ENCODE measurements at regions of chr1 and their contacts with region 1.

Region 1: DNA sequence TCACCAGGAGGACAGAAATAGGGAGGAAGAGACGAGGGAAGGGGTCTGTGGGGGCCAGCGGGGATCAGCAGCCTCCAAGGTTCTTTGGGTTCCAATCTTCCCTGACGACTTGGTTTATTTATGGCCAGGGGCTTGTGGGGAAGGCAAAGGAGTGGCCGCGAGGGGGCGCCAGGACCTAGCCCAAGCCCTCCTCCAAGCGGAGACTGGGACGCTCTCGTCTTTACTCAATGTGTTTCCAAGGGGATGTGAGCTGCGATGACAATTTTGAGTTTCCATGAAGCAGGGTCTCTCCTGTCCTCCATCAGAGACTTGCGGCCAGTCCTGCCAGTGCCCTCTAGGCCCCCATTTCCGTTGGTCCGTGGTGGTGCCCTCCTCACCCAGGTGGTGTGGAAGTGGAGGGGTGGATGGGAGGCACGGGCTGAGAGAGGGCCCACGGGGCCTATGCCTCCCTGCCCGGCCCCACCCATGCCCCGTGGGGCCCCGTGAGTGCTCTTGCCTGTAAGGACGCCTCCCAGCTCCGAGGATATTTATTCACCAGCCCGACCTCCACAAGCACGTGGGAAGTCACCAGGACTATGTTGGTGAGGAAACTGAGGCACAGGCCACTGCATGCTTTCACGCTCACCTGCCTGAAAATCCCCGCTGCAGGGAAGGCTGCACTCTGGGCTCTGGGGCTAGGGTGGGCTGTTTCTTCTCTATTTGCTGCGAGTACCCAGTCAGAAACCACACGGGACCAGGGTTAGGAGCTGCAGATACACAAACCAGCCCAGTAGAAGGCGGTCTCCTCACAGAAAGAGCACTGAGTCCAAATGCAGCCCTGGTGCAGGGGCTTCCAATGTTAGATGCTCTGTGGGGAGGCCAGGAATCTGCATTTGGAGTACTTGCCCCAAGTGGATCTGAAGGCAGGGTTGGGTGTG is 26.5 kb downstream of the DMRTB1 start:
- DNase-seq: peak; percentile 49
- ATAC-seq: peak; percentile 93
- H3K4me3 ChIP-seq: no peak overlapping the region
- H3K27ac ChIP-seq: no peak overlapping the region
- H3K4me1 ChIP-seq: no peaks in the 10 kb centered on the region
- H3K27me3 ChIP-seq: peaks cover 1 to 69% of the 10 kb centered on the region in 2 experiments; a peak in 4 of 5 replicates
- CTCF ChIP-seq: peak; percentile 89
- EP300 ChIP-seq: no peak
- POLR2A ChIP-seq: no peak
- RAD21 ChIP-seq: peak; percentile 84

Region 2: DNA sequence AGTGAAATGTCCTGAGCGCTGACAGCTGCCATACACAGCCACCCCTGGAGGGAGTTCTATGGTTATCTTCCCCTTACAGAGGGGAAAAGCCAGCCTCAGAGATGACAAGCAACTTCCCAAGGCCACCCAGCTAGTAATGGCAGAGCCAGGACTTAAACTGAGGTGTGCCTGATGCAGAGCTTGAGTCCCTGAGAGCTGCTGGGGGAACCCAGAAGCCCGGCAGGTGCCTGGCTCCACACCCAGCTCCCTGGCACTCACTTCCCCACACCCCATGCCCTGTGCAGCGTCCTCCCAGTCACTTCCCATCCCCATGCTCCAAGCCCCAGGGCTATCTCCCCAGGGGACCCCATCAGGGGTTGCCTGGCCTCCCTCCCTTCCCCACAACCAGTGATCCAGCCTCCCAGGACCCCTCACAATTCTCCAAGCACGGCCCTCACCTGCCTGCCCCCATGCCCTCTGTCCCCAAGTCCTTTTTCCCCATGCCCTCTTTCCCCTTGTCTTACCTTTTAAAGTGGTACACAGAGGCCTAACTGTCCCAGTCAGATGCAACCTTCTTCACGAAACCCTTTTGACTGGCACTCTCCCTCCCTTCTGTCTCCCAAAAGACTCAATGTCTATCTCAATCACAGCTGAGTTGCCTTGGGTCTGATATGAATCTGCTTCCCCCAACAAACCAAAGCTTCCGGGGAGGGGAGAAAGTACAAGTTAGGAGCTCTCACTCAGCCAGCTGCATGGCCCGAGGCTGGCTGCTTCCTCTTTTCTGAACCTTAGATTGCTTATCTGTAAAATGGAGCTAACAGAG is 118.0 kb before region 1 on chr1:
- CTCF ChIA-PET with region 1: no interaction called
- POLR2A ChIA-PET with region 1: no interaction called
- in situ Hi-C with region 1: no loop called
- intact Hi-C with region 1: no loop called
- DNase-seq: no peak
- ATAC-seq: no peak
- H3K4me3 ChIP-seq: no peak overlapping the region
- H3K27ac ChIP-seq: no peak overlapping the region
- H3K4me1 ChIP-seq: no peaks in the 10 kb centered on the region
- H3K27me3 ChIP-seq: peaks cover 3 to 65% of the 10 kb centered on the region in 2 experiments
- CTCF ChIP-seq: no peak
- EP300 ChIP-seq: no peak
- POLR2A ChIP-seq: no peak
- RAD21 ChIP-seq: no peak

Region 3: GRCh38 chr1:53417003-53417570 is 68.6 kb before region 1 on chr1:
- CTCF ChIA-PET with region 1: no interaction called
- POLR2A ChIA-PET with region 1: no interaction called
- in situ Hi-C with region 1: no loop called
- intact Hi-C with region 1: no loop called
- DNase-seq: no peak
- ATAC-seq: no peak
- H3K4me3 ChIP-seq: no peak overlapping the region
- H3K27ac ChIP-seq: no peak overlapping the region
- H3K4me1 ChIP-seq: no peaks in the 10 kb centered on the region
- H3K27me3 ChIP-seq: peaks cover 5 to 66% of the 10 kb centered on the region in 2 experiments; a peak in 3 of 5 replicates
- CTCF ChIP-seq: no peak
- EP300 ChIP-seq: no peak
- POLR2A ChIP-seq: no peak
- RAD21 ChIP-seq: no peak

Region 4: GRCh38 chr1:53450225-53450624 is 35.5 kb before region 1 on chr1:
- CTCF ChIA-PET with region 1: no interaction called
- POLR2A ChIA-PET with region 1: no interaction called
- in situ Hi-C with region 1: no loop called
- intact Hi-C with region 1: no loop called
- DNase-seq: no peak
- ATAC-seq: no peak
- H3K4me3 ChIP-seq: no peak overlapping the region
- H3K27ac ChIP-seq: no peak overlapping the region
- H3K4me1 ChIP-seq: no peaks in the 10 kb centered on the region
- H3K27me3 ChIP-seq: peaks cover 0 to 8% of the 10 kb centered on the region in 2 experiments; a peak in 1 of 5 replicates
- CTCF ChIP-seq: peak; percentile 41
- EP300 ChIP-seq: no peak
- POLR2A ChIP-seq: no peak
- RAD21 ChIP-seq: no peak

Region 5: DNA sequence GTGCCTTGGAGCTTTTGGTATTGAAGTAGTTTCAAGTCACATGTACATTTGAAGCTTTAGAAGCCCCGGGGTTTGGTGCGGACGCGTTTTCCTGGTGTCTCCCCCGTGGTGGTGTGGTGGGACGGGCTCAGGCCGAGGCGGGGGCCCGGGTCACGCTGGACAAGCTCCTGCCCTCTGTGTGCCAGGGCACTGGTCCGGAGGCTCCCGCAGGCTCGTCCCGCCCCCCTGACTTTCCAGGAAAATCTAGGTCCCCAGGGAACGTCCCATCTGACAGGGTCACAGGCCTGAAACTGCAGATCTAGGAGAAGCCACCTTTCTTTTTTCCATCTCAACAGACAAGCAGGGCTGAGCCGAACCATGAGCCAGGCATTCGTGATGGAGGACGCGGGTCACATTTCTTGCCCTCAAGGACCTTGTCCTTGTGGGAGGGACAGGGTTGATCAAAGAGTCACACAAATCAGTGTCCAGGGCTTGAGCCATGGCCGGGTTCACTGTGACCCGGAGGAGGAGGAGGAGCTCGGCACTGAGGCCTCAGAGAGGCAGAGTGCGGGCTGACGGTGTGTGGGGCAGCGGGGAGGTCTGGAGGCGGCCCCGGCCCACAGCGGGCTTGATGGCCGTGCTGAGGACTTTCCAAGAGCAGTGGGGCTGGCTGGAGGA is 24.9 kb before region 1 on chr1:
- CTCF ChIA-PET with region 1: no interaction called
- POLR2A ChIA-PET with region 1: no interaction called
- in situ Hi-C with region 1: no loop called
- intact Hi-C with region 1: no loop called
- DNase-seq: peak; percentile 20
- ATAC-seq: peak; percentile 89
- H3K4me3 ChIP-seq: no peak overlapping the region
- H3K27ac ChIP-seq: no peak overlapping the region
- H3K4me1 ChIP-seq: no peaks in the 10 kb centered on the region
- H3K27me3 ChIP-seq: peaks cover 3 to 34% of the 10 kb centered on the region in 2 experiments; a peak in 3 of 5 replicates
- CTCF ChIP-seq: no peak
- EP300 ChIP-seq: no peak
- POLR2A ChIP-seq: no peak
- RAD21 ChIP-seq: no peak

Region 6: DNA sequence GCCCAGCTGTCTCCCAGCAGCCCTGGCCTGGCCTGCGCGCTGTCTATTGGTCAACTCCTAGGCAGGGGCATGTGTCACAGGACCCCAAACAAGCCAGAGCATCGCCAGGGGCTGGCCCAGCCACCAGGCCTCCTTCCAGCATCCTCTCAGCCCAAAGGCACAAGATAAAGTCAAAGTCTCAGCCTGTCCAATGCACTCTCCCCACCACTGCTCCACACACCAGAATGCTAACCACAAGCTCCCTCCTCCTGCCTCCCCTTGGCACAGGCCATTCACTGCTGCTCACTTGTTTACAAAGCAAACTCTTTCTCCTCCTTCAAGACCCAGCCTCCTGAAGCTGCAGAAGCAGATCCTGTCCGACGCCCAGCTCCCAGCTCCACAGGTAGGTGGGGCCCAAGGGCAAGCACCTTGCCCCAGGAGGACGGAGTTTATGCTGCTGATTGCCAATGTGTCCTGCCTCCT is 106.8 kb after region 1 on chr1:
- CTCF ChIA-PET with region 1: interaction called, 11 read pairs
- POLR2A ChIA-PET with region 1: no interaction called
- in situ Hi-C with region 1: loop called (anchors 5 kb)
- intact Hi-C with region 1: loop called (anchors 1 kb)
- DNase-seq: no peak
- ATAC-seq: peak; percentile 50
- H3K4me3 ChIP-seq: no peak overlapping the region
- H3K27ac ChIP-seq: no peak overlapping the region
- H3K4me1 ChIP-seq: no peaks in the 10 kb centered on the region
- H3K27me3 ChIP-seq: peaks cover 6 to 23% of the 10 kb centered on the region in 2 experiments; a peak in 4 of 5 replicates
- CTCF ChIP-seq: peak; percentile 35; the same call in 1 of the 2 replicates
- EP300 ChIP-seq: no peak
- POLR2A ChIP-seq: no peak
- RAD21 ChIP-seq: no peak

Region 7: GRCh38 chr1:53681977-53682685 is 196.4 kb after region 1 on chr1:
- CTCF ChIA-PET with region 1: interaction called, 15 read pairs
- POLR2A ChIA-PET with region 1: no interaction called
- in situ Hi-C with region 1: loop called (anchors 5 kb)
- intact Hi-C with region 1: no loop called
- DNase-seq: peak; percentile 41
- ATAC-seq: peak; percentile 80
- H3K4me3 ChIP-seq: no peak overlapping the region
- H3K27ac ChIP-seq: no peak overlapping the region
- H3K4me1 ChIP-seq: peaks cover 15% of the 10 kb centered on the region
- H3K27me3 ChIP-seq: peaks cover 23 to 78% of the 10 kb centered on the region in 2 experiments
- CTCF ChIP-seq: peak; percentile 75
- EP300 ChIP-seq: no peak
- POLR2A ChIP-seq: no peak
- RAD21 ChIP-seq: no peak

Region 8: GRCh38 chr1:53754484-53755312 is 269.0 kb after region 1 on chr1:
- CTCF ChIA-PET with region 1: interaction called, 13 read pairs
- POLR2A ChIA-PET with region 1: no interaction called
- in situ Hi-C with region 1: no loop called
- intact Hi-C with region 1: no loop called
- DNase-seq: peak; percentile 55
- ATAC-seq: peak; percentile 79
- H3K4me3 ChIP-seq: no peak overlapping the region
- H3K27ac ChIP-seq: no peak overlapping the region
- H3K4me1 ChIP-seq: no peaks in the 10 kb centered on the region
- H3K27me3 ChIP-seq: no peaks in the 10 kb centered on the region
- CTCF ChIP-seq: peak; percentile 79
- EP300 ChIP-seq: no peak
- POLR2A ChIP-seq: no peak
- RAD21 ChIP-seq: peak; percentile 54; the same call in 1 of the 2 replicates

Measured in HepG2 (cell line).